PC-9 (cell line): ENCODE measurements at regions of chr1 and their contacts with region 1.

Region 1: DNA sequence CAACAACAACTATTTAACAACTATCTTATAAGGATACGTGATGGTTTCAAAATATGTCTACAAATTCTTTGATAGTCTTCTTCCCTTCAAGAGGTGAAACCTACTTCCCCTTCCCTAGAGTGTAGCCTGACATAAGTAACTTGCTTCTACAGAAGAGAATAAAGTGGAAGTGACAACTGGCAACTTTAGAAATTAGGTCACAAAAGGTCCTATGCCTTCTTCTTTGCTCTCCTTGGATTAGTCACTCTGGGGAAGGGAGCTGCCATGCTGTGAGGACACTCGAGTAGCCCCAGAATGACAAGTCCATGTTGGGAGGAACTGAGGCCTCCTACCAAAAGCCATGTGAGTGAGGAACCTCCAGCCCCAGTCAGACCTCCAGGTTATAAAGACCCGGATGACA is 19.2 kb downstream of the EFCAB14 start:
- DNase-seq: no peak
- H3K4me3 ChIP-seq: no peak overlapping the region
- H3K27ac ChIP-seq: no peak overlapping the region
- H3K4me1 ChIP-seq: no peaks in the 10 kb centered on the region
- H3K27me3 ChIP-seq: no peaks in the 10 kb centered on the region
- CTCF ChIP-seq: no peak

Region 2: GRCh38 chr1:47298025-47298699 is 598.5 kb after region 1 on chr1:
- CTCF ChIA-PET with region 1: no interaction called
- POLR2A ChIA-PET with region 1: no interaction called
- intact Hi-C with region 1: loop called (anchors 10 kb)
- DNase-seq: no peak
- H3K4me3 ChIP-seq: no peak overlapping the region
- H3K27ac ChIP-seq: no peak overlapping the region
- H3K4me1 ChIP-seq: no peaks in the 10 kb centered on the region
- H3K27me3 ChIP-seq: no peaks in the 10 kb centered on the region
- CTCF ChIP-seq: no peak